ENCODE measurements at regions of chr15 and their contacts with region 1.

Region 1: GRCh38 chr15:70812827-70813364 is 41.1 kb downstream of the LARP6 start:
- H3K4me3 Mint-ChIP-seq: no peak overlapping the region
- H3K27ac Mint-ChIP-seq: no peak overlapping the region
- H3K4me1 Mint-ChIP-seq: peaks cover under 1% of the 10 kb centered on the region
- H3K27me3 Mint-ChIP-seq: no peaks in the 10 kb centered on the region

Region 2: GRCh38 chr15:70679919-70680231 is 133.0 kb before region 1 on chr15:
- intact Hi-C with region 1: loop called (anchors 1 kb)
- H3K4me3 Mint-ChIP-seq: no peak overlapping the region
- H3K27ac Mint-ChIP-seq: no peak overlapping the region
- H3K4me1 Mint-ChIP-seq: peaks cover 5% of the 10 kb centered on the region
- H3K27me3 Mint-ChIP-seq: peaks cover 3% of the 10 kb centered on the region

Region 3: DNA sequence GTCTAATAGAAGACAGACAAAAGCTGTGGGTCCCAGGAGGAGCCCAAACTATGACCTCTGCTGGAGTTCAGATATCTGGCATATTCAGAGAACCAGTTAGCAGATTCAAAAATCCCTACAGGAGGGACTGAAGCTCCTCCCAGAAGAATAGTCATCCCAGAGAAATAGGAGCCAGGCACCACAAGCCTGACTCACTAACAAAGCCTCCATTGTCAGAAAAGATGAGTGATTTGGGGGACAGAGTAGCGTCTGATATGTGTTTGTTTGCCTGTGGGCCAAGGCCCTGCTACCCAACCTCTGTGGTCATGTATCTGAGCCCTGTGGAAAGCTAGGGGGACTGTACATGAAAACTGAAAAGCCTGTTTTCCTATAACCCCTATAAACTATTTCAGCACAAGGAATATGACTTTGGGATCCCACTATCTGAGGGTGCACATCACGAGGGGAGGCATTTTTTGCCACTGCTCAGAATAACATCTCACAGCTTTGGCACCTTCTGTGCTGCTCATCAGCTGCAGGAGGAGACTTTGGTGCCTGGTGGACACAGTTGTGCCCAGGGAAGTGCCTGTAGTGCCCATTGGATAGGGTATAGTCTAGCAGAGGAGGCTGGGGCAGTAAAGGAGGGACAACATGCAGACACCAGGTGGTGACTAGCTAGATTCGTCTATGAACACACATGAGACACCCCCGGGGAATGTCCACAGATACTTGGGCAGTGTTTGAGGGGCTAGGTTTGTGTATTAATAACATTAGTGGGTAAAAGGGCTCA is 50.7 kb after region 1 on chr15:
- intact Hi-C with region 1: no loop called
- H3K4me3 Mint-ChIP-seq: no peak overlapping the region
- H3K27ac Mint-ChIP-seq: no peak overlapping the region
- H3K4me1 Mint-ChIP-seq: no peaks in the 10 kb centered on the region
- H3K27me3 Mint-ChIP-seq: peaks cover 2% of the 10 kb centered on the region